ENCODE measurements at regions of chr5 and their contacts with region 1.

Region 1: DNA sequence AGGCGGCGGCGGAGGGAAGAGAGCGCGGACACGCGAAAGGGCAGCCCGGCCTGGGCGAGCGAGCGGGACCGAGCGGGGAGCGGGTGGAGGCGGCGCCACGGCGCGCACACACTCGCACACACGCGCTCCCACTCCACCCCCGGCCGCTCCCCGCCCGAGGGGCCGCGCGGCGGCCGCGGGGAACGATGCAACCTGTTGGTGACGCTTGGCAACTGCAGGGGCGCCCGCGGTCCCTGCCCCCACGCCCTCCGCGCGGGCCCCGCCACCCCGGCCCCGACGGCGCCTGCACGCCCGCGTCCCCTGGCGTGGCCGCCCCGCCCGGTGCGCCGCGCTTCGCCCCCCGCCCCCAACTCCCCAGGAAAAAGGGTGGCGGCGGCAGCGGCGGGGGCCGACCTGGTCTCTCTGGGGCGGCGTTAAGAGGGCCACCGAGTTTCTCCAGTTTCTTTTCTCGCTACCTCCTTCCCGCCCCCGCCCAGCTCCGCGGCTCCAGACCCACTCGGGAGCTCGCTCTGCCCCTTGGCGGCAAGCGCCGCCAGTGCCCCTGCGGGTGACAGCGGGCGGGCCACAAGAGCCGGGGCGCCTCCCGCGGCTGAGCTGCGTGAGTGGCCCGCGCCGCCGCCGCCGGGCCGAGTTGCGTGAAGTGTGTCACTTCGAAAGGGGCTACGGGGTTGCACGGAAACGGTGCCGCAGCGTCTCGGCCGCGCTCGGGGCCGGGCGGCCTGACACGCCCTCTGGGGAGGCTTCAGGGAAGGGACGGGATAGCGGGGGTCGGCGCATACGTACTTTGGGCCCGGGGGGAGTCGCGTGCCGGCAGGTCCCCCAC is at the start of gene NR3C1:
- DNase-seq: peak; percentile 86
- ATAC-seq: peak; percentile 82
- H3K4me3 ChIP-seq: peak within 1 kb of the TSS; percentile 97
- H3K27ac ChIP-seq: peak within 1 kb of the TSS; percentile 100
- H3K4me1 ChIP-seq: peaks cover 7% of the 10 kb centered on the region
- H3K27me3 ChIP-seq: no peaks in the 10 kb centered on the region
- CTCF ChIP-seq: peak; percentile 68
- POLR2A ChIP-seq: peak; percentile 55
- RAD21 ChIP-seq: peak; percentile 68
- total RNA-seq, gene NR3C1: 62.8 and 77.4 TPM in 2 replicates

Region 2: DNA sequence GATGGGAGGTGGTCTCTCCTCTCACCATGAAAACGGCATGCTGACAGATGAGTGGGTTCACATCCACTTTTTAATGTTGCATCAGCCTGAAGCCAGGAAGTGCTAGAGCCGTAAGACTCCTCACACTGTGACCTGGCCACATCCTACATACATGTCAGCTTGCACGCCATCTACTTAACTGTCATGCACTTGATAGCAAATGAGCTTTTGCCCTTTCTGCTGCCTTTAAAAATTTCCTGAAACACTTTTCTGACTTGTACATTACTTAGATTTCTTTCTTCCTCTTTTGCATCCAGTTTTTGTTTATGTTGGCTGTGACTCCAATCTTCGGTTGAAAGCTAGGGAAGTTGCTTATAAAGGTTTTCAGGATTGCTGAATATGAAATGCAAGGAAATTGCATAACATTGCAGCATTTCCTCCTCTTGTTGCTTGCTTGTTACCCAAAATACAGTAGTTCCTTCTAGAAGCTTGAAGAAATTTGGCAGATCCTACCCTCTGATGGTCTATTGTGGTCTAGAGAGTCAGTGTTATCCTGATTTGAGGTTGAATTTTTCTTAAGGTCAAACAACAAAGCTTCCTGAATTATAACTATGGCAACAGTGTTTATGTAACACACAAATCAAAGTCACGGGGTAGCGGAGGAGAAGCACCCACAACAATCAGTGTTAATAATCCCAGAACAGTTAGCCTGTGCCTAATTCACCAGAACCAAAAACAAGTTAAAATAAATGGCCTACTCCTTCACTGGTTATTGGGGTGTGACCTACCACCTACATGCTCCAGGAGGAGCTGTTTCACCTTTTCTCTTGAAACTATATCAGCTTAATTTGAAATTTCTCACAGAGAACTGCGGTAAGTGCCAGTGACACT is 401.1 kb before region 1 on chr5:
- CTCF ChIA-PET with region 1: no interaction called
- POLR2A ChIA-PET with region 1: no interaction called
- dilution Hi-C with region 1: no loop called
- in situ Hi-C with region 1: no loop called
- intact Hi-C with region 1: loop called (anchors 5 kb)
- DNase-seq: peak; percentile 86
- ATAC-seq: peak; percentile 59
- H3K4me3 ChIP-seq: no peak overlapping the region
- H3K27ac ChIP-seq: peak overlapping the region; percentile 81
- H3K4me1 ChIP-seq: peaks cover 12% of the 10 kb centered on the region
- H3K27me3 ChIP-seq: no peaks in the 10 kb centered on the region
- CTCF ChIP-seq: peak; percentile 63
- POLR2A ChIP-seq: no peak; the same call in 1 of the 2 replicates
- RAD21 ChIP-seq: peak; percentile 62

Region 3: GRCh38 chr5:143142596-143143435 is 261.0 kb before region 1 on chr5:
- CTCF ChIA-PET with region 1: no interaction called
- POLR2A ChIA-PET with region 1: no interaction called
- dilution Hi-C with region 1: no loop called
- in situ Hi-C with region 1: no loop called
- intact Hi-C with region 1: loop called (anchors 2 kb)
- DNase-seq: peak; percentile 17
- ATAC-seq: no peak
- H3K4me3 ChIP-seq: no peak overlapping the region
- H3K27ac ChIP-seq: no peak overlapping the region
- H3K4me1 ChIP-seq: peaks cover 3% of the 10 kb centered on the region; the same call in 1 of the 2 replicates
- H3K27me3 ChIP-seq: no peaks in the 10 kb centered on the region
- CTCF ChIP-seq: no peak
- POLR2A ChIP-seq: no peak
- RAD21 ChIP-seq: no peak

Region 4: DNA sequence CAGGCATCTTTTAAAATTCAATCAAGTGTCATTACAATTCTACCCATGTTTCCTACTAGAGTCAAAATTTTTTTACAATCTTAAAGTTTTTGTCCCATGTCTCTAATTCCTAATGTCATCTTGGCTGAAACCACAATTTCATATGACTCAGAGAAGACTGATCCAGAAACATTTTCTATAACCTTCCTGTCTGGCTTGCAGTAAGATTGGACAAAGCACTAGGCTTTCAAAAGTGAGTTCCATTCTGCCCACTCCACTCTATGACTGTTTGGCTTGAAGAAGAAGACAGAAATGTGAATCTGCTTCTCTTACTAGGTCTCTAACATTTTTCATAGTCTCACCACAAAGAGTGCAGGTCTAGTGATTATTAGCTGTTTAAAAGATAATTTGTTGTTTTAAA is 89.1 kb before region 1 on chr5:
- CTCF ChIA-PET with region 1: no interaction called
- POLR2A ChIA-PET with region 1: no interaction called
- dilution Hi-C with region 1: no loop called
- in situ Hi-C with region 1: no loop called
- intact Hi-C with region 1: loop called (anchors 5 kb)
- DNase-seq: peak; percentile 89
- ATAC-seq: peak; percentile 69
- H3K4me3 ChIP-seq: no peak overlapping the region
- H3K27ac ChIP-seq: peak overlapping the region; percentile 17; the same call in 1 of the 2 replicates
- H3K4me1 ChIP-seq: peaks cover 25% of the 10 kb centered on the region
- H3K27me3 ChIP-seq: no peaks in the 10 kb centered on the region
- CTCF ChIP-seq: no peak
- POLR2A ChIP-seq: no peak
- RAD21 ChIP-seq: peak; percentile 22; the same call in 1 of the 2 replicates

Region 5: GRCh38 chr5:143685246-143685802 is 281.5 kb after region 1 on chr5:
- CTCF ChIA-PET with region 1: no interaction called
- POLR2A ChIA-PET with region 1: no interaction called
- dilution Hi-C with region 1: no loop called
- in situ Hi-C with region 1: no loop called
- intact Hi-C with region 1: loop called (anchors 1 kb)
- DNase-seq: peak; percentile 30
- ATAC-seq: no peak
- H3K4me3 ChIP-seq: no peak overlapping the region
- H3K27ac ChIP-seq: no peak overlapping the region
- H3K4me1 ChIP-seq: peaks cover 8% of the 10 kb centered on the region
- H3K27me3 ChIP-seq: no peaks in the 10 kb centered on the region
- CTCF ChIP-seq: peak; percentile 53
- POLR2A ChIP-seq: no peak
- RAD21 ChIP-seq: peak; percentile 58

Region 6: GRCh38 chr5:144142139-144142823 is 738.5 kb after region 1 on chr5:
- CTCF ChIA-PET with region 1: no interaction called
- POLR2A ChIA-PET with region 1: no interaction called
- dilution Hi-C with region 1: no loop called
- in situ Hi-C with region 1: no loop called
- intact Hi-C with region 1: loop called (anchors 2 kb)
- DNase-seq: peak; percentile 67
- ATAC-seq: peak; percentile 89
- H3K4me3 ChIP-seq: no peak overlapping the region
- H3K27ac ChIP-seq: no peak overlapping the region
- H3K4me1 ChIP-seq: peaks cover 7% of the 10 kb centered on the region
- H3K27me3 ChIP-seq: no peaks in the 10 kb centered on the region
- CTCF ChIP-seq: peak; percentile 76
- POLR2A ChIP-seq: no peak
- RAD21 ChIP-seq: peak; percentile 83